Activated naive CD8-positive, alpha-beta T cell treated with anti-CD3 and anti-CD28 coated beads, Interleukin-2, amount 10 ng/mL, durations not matched to agents 7 days and 5 days (primary cell): ENCODE measurements at regions of chr1 and their contacts with region 1.

Region 1: GRCh38 chr1:24481101-24481500 is 21.5 kb upstream of the RCAN3 start:
- DNase-seq: no peak
- ATAC-seq: peak; percentile 74
- H3K4me3 Mint-ChIP-seq: peak overlapping the region; percentile 79
- H3K27ac Mint-ChIP-seq: peak overlapping the region; percentile 90
- H3K4me1 Mint-ChIP-seq: peaks cover 48% of the 10 kb centered on the region
- H3K27me3 Mint-ChIP-seq: no peaks in the 10 kb centered on the region

Region 2: GRCh38 chr1:24491577-24492360 is 10.7 kb after region 1 on chr1:
- POLR2A ChIA-PET with region 1: interaction called, 13 read pairs
- DNase-seq: no peak
- ATAC-seq: no peak
- H3K4me3 Mint-ChIP-seq: no peak overlapping the region
- H3K27ac Mint-ChIP-seq: no peak overlapping the region
- H3K4me1 Mint-ChIP-seq: peaks cover 22% of the 10 kb centered on the region
- H3K27me3 Mint-ChIP-seq: no peaks in the 10 kb centered on the region

Region 3: DNA sequence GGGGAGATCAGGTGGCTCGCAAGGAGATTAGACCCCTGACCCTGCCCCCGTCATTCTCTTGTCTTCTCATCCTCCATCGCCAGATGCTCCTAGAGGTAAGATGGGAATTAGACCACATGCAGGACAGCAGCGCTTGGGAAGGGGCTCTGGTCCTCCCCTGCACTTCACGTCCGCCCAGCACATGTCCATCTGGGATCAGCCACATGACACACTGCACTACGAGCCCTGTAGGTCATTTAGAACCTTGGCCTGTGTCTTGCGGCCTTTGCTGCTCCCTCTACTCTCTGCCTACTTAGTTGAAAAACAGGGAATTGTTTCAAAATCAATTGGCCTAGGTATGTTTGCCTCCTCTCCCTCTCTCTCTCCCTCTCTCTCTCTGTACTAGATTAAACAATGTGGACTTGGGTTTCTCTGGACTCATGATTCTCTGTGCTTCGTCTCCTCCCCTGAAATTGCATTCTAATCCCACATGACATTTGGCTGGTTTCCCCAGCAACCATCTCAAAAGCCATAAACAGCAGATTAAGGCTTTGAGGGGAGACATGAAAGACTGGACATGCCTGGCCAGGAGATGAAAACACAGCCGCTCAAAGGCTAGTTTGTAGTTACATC is 71.0 kb after region 1 on chr1:
- POLR2A ChIA-PET with region 1: no interaction called
- DNase-seq: no peak
- ATAC-seq: no peak
- H3K4me3 Mint-ChIP-seq: no peak overlapping the region
- H3K27ac Mint-ChIP-seq: no peak overlapping the region
- H3K4me1 Mint-ChIP-seq: peaks cover 4% of the 10 kb centered on the region
- H3K27me3 Mint-ChIP-seq: peaks cover 29% of the 10 kb centered on the region